OCI-LY7 (cell line): ENCODE measurements at regions of chr15 and their contacts with region 1.

Region 1: DNA sequence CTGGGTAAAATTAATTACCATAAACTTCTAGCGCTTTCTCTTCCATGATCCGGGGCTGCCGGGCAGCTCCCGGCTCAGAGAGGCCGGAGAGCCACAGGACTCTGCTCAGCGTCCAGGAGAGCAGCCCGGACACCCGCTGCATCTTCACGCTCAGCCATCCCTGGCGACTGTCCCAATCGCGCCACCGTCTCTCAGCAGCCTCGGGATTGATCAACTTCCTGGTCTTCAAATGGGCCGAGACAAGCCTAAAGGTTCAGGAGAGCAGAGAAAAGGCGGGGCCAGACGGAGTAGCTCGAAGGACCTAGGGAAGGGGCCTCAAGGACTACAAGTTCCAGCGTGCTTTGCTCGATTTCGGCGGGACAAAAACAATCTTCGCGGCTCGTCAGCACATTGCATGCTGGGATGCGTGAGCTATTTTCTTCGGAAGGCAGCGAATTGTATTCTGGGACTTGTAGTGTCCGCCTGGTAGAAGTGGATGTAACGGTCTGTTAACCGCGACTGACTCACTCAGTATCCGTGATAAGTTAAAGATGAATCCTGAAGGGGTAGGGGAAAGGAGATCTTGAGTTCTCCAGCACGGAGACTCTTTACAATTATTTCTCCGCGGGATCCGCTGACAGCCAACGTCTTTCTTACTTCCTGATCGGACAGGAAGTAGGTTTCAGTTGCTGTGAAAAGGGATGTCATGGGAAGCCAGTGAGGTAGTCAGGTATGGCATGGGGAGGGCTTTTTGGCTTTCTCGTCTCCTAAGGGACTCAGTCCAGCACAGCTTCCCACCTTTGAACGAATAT is at the start of gene CIAO2A:
- DNase-seq: peak; percentile 98
- H3K4me3 ChIP-seq: peak within 1 kb of the TSS; percentile 85
- H3K27ac ChIP-seq: peak within 1 kb of the TSS; percentile 75
- H3K4me1 ChIP-seq: peaks cover 68% of the 10 kb centered on the region
- CTCF ChIP-seq: no peak
- total RNA-seq, gene CIAO2A: 71.6 and 84.7 TPM in 2 replicates

Region 2: DNA sequence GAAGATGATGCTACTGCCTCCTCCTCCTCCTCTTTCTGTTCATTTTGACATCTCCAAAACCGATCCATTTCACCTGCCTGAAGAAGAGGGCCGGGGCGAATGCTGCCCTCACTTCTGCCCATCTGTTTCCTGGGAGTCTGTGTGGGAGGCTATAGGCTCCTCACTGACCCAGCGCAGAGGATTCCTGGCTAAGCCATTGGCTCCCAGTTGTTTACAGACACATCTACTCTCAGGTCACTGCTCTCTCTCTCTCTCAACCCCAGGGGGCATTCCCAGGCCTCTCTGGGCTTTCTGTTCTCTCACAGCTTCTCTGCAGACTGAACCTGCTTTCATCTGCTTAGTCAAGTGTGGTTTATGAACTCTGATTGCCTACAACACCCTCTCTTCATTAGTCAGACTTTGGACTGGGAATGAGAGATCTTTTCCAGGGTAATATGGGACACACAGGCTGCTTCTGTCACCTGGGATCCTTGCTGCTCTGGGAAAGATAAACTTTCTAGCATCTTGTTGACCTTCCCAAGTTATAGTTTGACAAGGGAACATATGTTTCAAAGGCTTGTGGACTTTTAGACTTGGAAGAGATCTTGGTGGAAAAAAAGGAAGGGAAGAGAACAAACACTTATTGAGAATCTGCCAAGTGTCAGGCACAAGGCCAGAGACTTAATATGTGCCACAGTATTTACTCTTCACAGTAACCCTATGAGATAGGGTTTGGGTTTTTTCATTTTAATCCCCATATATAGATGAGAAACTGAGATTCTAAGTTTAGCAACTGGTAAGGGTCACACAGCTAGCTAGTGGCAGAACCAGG is 619.6 kb before region 1 on chr15:
- CTCF ChIA-PET with region 1: no interaction called
- POLR2A ChIA-PET with region 1: no interaction called
- intact Hi-C with region 1: loop called (anchors 10 kb)
- DNase-seq: peak; percentile 76
- H3K4me3 ChIP-seq: peak overlapping the region; percentile 45
- H3K27ac ChIP-seq: peak overlapping the region; percentile 88
- H3K4me1 ChIP-seq: peaks cover 64% of the 10 kb centered on the region
- CTCF ChIP-seq: peak; percentile 45; the same call in 1 of the 2 replicates

Region 3: DNA sequence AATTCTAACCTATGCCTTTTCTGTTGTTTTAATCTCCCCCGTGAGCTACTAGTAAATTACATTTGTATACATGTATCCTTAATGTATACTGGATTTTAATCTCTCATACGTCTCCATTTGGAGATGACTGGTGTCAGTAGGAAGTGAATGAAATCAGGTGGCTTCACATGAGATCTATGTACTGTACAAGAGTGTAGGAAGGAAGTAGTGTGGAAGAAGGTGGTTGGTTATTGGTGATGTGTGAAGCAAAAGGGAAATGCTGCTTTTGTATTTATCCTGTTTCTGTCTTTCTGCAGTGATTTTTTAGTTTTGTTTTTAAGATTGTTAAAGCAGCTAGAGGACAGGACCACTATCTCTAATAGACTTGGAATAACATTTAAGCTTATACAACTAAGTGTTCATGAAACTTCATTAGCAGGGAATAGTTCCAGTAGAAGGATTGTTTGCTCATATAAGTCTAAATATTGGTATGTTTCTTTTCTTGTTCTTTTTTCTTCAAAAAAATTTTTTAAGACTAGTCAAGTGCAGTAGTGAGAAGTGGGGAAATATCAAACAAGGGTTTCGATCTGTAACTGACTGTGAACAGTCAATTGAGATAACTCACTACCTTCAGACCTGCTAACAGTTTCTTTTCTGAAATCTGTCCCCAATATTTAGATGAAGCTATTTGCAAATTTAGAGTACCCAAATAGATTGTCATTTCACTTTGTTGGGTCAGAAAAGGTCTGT is 17.3 kb after region 1 on chr15:
- CTCF ChIA-PET with region 1: no interaction called
- POLR2A ChIA-PET with region 1: interaction called, 12 read pairs
- intact Hi-C with region 1: no loop called
- DNase-seq: peak; percentile 42
- H3K4me3 ChIP-seq: no peak overlapping the region
- H3K27ac ChIP-seq: no peak overlapping the region
- H3K4me1 ChIP-seq: peaks cover 16% of the 10 kb centered on the region
- CTCF ChIP-seq: no peak

Region 4: DNA sequence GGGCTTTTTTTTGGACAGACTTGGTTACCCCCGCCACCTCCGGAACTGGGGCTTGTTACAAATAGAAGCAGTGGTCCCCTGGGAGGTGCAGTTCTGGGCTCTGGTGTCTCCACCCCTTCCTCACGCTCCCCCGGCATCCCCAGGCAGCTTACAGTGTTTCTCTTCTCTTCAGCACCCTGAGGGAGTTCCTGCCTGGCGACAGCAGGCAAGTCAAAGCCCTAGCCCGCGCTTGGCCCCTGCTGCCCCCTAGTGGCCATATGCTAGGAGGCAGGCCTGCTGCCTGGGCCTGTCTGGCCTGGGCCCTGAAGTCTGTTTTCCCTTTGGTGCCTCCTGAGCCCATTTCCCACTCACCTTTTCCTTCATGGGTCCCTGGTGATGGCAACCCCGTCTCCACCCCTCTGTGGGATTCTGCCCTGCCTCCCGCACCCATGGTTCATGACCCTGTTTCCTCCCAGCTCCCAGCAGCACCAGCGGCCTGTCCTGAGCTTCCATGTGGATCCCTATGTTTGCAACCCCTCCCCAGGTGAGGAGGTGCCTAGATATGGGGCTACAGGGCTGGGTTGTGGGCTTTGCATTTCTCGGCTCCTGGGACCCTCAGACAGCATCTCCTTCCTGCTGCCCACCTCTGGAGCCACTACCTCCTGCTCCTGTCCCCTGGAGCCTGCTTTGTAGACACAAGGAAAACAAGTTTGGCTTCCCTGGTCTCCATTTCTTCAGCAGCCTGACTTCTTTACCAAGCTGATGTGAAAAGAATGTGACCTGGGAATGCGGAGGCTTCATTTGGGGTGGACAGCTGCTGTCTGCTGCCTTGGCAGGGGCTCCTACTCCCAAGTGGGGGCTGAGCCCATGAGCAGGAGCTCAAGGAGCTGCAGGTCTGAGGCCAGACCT is 59.9 kb after region 1 on chr15:
- CTCF ChIA-PET with region 1: interaction called, 4 read pairs
- POLR2A ChIA-PET with region 1: interaction called, 10 read pairs
- intact Hi-C with region 1: loop called (anchors 1 kb)
- DNase-seq: peak; percentile 98
- H3K4me3 ChIP-seq: peak overlapping the region; percentile 90
- H3K27ac ChIP-seq: peak overlapping the region; percentile 93
- H3K4me1 ChIP-seq: peaks cover 46% of the 10 kb centered on the region
- CTCF ChIP-seq: peak; percentile 97

Region 5: DNA sequence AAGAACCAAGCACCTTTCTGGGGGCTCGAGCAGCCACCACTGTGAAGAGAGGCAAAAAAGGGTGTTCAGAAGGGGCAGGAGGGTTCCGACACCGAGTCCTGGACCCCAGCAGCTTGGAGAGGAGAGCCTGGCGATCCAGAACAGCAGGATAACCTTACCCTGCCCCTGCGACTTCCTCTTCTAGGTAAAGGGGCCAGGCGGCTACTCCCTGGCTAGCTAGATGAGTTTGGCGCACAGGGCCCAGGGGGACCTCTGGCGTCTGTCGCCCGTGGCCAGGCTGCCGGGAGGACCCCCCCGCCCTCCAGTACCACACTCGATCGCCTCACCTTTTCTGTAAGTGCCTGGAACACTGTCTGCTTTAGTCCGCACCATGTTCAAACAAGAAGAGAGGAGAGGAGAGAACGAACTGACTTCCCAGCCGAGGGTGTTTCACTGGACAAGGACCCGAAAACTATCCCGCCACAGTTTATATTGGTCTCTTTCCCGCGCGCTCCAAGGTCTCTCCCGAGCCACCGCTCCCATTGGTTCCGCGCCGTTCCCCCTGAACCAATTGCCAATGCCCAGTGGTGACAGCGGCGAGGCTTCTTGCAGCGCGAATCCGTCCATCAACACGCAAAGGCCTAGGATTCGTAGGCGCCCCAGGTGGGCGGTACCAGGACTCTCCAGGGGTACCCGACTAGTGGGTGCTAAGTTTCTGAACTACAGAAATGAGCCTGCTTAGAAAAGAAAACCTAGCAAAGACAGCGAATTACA is 287.4 kb after region 1 on chr15 and contains the start of gene PCLAF:
- CTCF ChIA-PET with region 1: no interaction called
- POLR2A ChIA-PET with region 1: no interaction called
- intact Hi-C with region 1: loop called (anchors 5 kb)
- DNase-seq: peak; percentile 98
- H3K4me3 ChIP-seq: peak within 1 kb of the TSS; percentile 94
- H3K27ac ChIP-seq: peak within 1 kb of the TSS; percentile 52
- H3K4me1 ChIP-seq: peaks cover 21% of the 10 kb centered on the region
- CTCF ChIP-seq: no peak; the same call in 1 of the 2 replicates
- total RNA-seq, gene PCLAF: 49.3 TPM in 2 replicates